A549 (cell line): ENCODE measurements at regions of chr7 and their contacts with region 1.

Region 1: DNA sequence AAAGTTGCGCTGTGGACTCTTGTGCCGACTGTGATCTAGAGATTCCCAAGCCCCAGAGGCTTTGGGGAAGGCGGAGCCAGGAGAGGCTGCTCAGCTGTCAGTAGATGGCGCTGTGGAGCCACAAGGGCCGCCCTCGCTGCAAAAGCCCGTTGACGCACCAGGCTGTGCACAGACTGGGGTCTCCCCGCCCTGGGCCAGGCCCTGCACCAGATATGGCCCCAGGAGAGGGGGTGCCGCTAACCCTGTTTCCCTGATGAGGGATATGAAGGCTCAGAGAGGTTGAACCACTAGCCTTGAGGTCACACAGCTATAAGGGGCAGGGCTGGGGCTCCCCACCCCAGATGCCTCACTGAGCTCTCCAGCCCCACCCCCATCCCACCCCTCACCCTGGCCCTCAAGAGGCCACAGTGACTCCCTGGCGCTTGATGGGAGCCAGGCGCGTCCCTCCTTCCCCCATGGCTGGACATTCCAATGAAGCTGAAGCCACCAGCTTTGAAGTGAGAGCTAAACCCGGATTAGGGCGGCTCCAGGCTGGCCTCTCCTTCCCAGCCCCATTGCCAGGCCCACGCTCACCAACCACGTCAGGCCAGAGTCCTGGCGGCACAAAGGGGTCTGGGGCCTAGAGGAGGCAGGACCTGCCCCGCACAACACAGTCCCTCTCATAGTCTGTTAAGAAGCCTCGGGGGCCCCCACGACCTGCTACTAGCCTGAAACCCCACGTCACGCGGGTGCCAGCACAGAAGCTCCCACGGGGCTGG is 26.4 kb downstream of the MYL10 start:
- DNase-seq: peak; percentile 72 to 78
- ATAC-seq: peak; percentile 95 to 99
- H3K4me3 ChIP-seq: no peak overlapping the region
- H3K27ac ChIP-seq: peak overlapping the region; percentile 57 to 81; a peak in 4 of 6 replicates
- H3K4me1 ChIP-seq: peaks cover 6% of the 10 kb centered on the region
- CTCF ChIP-seq: peak; percentile 95
- EP300 ChIP-seq: no peak
- POLR2A ChIP-seq: no peak
- RAD21 ChIP-seq: peak; percentile 94 to 95

Region 2: GRCh38 chr7:101586078-101586905 is 16.4 kb before region 1 on chr7:
- CTCF ChIA-PET with region 1: interaction called, 24 read pairs
- POLR2A ChIA-PET with region 1: no interaction called
- DNase-seq: no peak
- ATAC-seq: no peak
- H3K4me3 ChIP-seq: no peak overlapping the region
- H3K27ac ChIP-seq: no peak overlapping the region
- H3K4me1 ChIP-seq: peaks cover 12% of the 10 kb centered on the region; the same call in 2 of the 3 replicates
- CTCF ChIP-seq: no peak
- EP300 ChIP-seq: no peak
- POLR2A ChIP-seq: no peak
- RAD21 ChIP-seq: no peak

Region 3: DNA sequence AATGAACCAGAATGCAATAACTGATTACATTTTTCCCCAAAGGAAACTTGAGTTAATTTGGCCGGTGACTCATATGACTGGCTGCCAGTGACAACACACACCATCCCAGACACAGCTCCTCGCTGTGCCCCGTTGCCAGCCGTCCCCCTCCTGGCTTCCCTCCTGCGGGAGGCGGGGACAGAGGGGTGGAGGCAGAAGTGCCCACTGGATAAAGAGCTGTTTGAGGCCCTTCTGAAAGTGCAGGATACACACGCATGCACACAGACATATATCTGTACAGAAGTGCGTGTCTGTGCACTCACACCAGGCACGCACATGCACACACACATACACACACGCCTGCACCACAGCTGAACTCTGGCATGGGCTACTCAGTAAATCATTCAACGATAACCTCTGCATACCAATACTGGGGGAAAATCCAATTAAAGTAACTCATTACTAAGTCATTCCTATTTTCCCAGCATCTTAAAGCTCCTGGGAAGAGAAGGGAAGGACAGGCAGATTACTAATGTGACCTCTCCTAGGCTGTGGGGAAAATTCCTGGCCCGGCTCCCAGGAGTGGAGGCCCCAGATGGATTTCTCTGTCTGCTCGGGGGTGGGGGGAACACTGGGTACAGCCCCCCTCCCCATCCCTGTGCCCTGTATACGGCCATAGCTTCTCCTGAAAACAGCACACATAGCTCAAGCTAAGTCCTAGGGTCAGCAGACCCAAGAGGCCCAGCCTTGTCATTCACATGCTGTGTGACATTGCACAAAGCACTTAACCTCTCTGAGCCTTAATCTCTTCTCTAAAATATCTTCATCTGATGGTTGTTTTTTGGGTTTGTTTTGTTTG is 78.7 kb after region 1 on chr7:
- CTCF ChIA-PET with region 1: interaction called, 11 read pairs
- POLR2A ChIA-PET with region 1: interaction called, 3 read pairs
- DNase-seq: peak; percentile 78 to 89
- ATAC-seq: peak; percentile 94
- H3K4me3 ChIP-seq: no peak overlapping the region
- H3K27ac ChIP-seq: peak overlapping the region; percentile 46 to 80; a peak in 5 of 6 replicates
- H3K4me1 ChIP-seq: peaks cover 27% of the 10 kb centered on the region
- CTCF ChIP-seq: no peak
- EP300 ChIP-seq: no peak
- POLR2A ChIP-seq: no peak
- RAD21 ChIP-seq: no peak

Region 4: GRCh38 chr7:102236592-102237287 is 634.1 kb after region 1 on chr7:
- CTCF ChIA-PET with region 1: interaction called, 33 read pairs
- POLR2A ChIA-PET with region 1: no interaction called
- DNase-seq: peak; percentile 78 to 87
- ATAC-seq: peak; percentile 94 to 97
- H3K4me3 ChIP-seq: no peak overlapping the region
- H3K27ac ChIP-seq: peak overlapping the region; percentile 65 to 78
- H3K4me1 ChIP-seq: peaks cover 6% of the 10 kb centered on the region
- CTCF ChIP-seq: peak; percentile 89
- EP300 ChIP-seq: no peak
- POLR2A ChIP-seq: no peak
- RAD21 ChIP-seq: peak; percentile 98